ENCODE measurements at regions of chr1 and their contacts with region 1.

Region 1: DNA sequence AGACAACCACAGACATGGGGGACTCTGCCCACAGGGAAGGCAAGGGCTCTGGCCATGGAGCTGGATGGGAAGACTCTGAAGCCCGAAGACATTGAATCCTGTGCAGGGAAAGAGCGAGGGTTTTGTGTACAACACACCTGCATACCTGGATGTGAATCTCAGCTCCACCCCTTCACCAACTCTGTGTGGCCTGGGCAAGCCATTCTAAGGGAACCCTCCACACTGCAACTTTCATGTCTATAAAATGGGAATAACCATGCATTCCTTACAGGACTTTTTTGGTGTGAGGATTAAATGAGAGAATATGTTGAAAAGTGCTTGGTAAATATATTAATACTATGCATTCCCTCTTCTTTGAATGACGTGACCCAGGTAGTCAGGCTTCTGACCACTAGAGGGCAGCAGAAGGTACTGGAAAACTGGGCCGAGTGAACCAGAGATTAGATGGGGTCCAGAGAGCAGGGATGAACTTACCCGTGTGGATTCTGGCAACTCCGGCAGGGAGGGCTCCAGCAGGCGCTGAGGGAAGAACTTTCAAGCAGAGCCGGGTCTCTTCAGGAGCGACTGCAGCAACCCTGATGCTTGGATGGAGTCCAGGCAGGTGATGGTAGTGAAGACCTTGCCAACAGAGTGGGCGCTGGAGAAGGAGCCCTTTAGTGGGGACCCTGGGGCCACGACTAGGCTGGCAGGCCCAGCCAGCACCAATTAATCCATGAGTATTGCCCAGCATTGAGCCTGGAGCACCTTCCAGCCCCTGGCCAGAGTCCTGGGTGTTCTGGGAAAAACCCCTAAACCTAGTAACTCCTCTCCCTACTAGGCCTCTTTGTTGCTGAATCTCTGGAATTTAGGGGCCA is 834 bp upstream of the ELF3 start:
- DNase-seq: peak; percentile 44 to 64
- ATAC-seq: peak; percentile 59 to 86 (median 74)
- H3K4me3 ChIP-seq: no peak overlapping the region
- H3K27ac ChIP-seq: no peak overlapping the region
- H3K4me1 ChIP-seq: no peaks in the 10 kb centered on the region
- H3K27me3 ChIP-seq: no peaks in the 10 kb centered on the region
- CTCF ChIP-seq: peak; percentile 80

Region 2: DNA sequence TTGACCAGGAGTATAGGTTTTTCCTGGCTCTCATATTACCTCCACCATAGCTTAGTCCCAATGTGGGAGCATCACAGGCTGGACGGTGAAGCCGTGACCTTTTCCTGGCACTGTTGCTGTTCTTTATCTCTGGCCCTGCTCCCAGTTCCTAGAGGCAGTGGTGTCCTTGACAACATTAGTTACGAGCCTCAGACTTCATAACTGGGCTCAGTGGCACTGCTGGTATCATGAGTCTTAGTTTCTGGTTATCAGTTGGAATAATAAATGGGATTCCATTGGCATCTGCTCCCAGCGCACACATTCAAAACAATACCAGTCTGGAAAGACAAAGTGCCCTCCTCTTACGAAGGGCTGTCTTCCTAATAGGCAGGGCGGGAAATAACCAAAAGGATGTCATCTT is 19.1 kb before region 1 on chr1:
- intact Hi-C with region 1: no loop called
- DNase-seq: no peak
- ATAC-seq: peak in 1 of 4 donors; percentile 31
- H3K4me3 ChIP-seq: no peak overlapping the region
- H3K27ac ChIP-seq: no peak overlapping the region
- H3K4me1 ChIP-seq: peaks cover 16% of the 10 kb centered on the region
- H3K27me3 ChIP-seq: no peaks in the 10 kb centered on the region
- CTCF ChIP-seq: no peak

Region 3: DNA sequence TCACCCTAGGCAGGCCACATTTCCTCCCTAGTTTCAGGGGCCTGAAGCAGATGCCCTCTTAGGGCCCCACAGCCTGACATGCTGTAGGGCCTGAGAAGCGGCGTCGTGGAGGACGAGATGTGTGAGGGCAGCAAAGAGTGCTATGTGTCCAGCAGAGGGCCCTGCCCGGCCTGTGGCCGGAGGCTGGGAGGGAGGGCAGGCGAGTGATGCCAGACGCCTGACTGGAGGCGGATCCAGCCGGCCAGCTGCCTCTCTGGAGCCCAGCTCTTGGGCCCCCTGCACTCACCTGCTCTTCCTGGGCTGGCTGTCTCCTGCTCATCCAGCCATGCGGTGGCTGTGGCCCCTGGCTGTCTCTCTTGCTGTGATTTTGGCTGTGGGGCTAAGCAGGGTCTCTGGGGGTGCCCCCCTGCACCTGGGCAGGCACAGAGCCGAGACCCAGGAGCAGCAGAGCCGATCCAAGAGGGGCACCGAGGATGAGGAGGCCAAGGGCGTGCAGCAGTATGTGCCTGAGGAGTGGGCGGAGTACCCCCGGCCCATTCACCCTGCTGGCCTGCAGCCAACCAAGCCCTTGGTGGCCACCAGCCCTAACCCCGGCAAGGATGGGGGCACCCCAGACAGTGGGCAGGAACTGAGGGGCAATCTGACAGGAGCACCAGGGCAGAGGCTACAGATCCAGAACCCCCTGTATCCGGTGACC is 113.2 kb after region 1 on chr1 and contains the start of gene GPR37L1:
- intact Hi-C with region 1: loop called in 1 of 2 experiments (anchors 5 kb)
- DNase-seq: peak; percentile 50 to 71
- ATAC-seq: peak; percentile 69 to 79 (median 78)
- H3K4me3 ChIP-seq: no peak within 1 kb of the TSS
- H3K27ac ChIP-seq: no peak within 1 kb of the TSS
- H3K4me1 ChIP-seq: no peaks in the 10 kb centered on the region
- H3K27me3 ChIP-seq: no peaks in the 10 kb centered on the region
- CTCF ChIP-seq: peak; percentile 35
- total RNA-seq, gene GPR37L1: not detected

Region 4: DNA sequence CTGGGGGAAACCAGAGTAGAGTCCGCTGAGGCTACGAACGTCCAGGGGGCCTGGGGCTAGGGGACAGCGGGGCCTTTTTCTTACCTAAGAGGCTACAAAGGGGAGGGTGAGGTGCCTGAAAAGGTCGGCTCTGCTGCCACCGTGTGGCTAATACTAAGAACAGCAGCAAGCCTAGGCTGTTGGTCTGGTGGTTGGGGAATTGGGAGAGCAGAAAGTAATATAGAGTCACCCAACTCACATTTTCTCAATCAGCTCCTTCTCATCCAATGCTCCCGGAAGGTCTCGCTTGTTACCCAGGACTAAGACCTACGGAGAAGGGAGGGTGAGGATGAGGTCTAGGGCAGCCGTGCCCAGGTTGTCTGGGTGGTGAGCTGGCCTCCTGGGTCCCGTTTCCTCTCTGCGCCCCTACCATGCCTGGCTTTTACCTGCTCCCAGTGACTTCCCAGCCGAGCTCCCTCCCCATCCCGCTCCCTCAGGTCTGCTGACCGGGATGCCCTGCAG is 125.7 kb after region 1 on chr1:
- intact Hi-C with region 1: loop called in 1 of 2 experiments (anchors 1 kb)
- DNase-seq: peak in 1 of 2 donors; percentile 49
- ATAC-seq: peak; percentile 73 to 81 (median 77)
- H3K4me3 ChIP-seq: no peak overlapping the region
- H3K27ac ChIP-seq: no peak overlapping the region
- H3K4me1 ChIP-seq: peaks cover 13% of the 10 kb centered on the region
- H3K27me3 ChIP-seq: no peaks in the 10 kb centered on the region
- CTCF ChIP-seq: peak; percentile 83